Gastrocnemius medialis (tissue), 4 donors: ENCODE measurements at regions of chr3 and their contacts with region 1.

Region 1: DNA sequence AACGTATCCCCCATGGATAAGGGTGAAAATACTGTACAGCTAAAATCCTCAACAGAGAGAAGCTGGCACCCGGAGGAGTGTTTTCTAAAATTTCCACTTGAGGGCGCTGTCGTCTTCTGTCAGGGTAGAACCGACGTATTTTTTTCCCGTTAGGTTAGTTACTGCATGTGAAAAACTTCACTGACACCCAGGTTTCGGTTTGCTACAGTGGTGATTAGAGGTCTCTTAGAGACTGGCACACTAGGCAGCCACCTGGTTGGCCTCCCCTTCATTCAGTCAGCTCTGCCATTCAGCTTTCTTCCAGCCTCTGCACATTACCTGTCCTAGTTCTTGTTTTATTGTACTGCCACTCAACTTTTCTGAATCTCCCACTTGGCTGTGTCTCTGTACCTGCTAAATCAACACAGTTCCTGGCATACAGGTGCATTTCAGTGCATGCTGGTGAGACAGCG is 18.4 kb downstream of the CCK start:
- DNase-seq: peak in 1 of 2 donors; percentile 30
- ATAC-seq: peak in 1 of 2 donors; percentile 58
- H3K4me3 ChIP-seq: no peak overlapping the region
- H3K27ac ChIP-seq: no peak overlapping the region
- H3K4me1 ChIP-seq: no peaks in the 10 kb centered on the region
- H3K27me3 ChIP-seq: no peaks in the 10 kb centered on the region
- CTCF ChIP-seq: peak; percentile 29 to 63 (median 60)
- POLR2A ChIP-seq: no peak

Region 2: DNA sequence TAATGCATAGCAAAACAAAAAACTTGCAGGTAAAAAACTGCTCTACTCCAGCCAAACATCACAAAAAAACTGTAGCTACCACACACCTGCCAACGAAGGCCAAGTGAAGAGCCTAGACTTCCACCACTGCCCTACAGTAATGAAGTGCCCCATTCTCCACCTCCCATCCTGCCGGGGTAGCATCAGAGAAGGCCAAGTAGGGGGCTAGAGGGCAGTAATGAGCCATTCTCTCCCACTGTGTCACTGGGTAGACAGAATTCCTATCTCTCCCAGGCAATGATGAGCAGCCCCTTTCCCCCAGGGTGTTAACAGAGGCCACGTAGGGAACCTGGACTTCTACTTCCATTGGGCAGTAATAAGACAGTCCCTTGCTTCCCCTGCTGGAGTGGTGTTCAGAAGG is 324.7 kb after region 1 on chr3:
- in situ Hi-C with region 1: loop called in 1 of 4 experiments (anchors 25 kb)
- intact Hi-C with region 1: no loop called
- DNase-seq: no peak
- ATAC-seq: peak in 1 of 2 donors; percentile 51
- H3K4me3 ChIP-seq: no peak overlapping the region
- H3K27ac ChIP-seq: no peak overlapping the region
- H3K4me1 ChIP-seq: no peaks in the 10 kb centered on the region
- H3K27me3 ChIP-seq: no peaks in the 10 kb centered on the region
- CTCF ChIP-seq: peak in 2 of 5 experiments; percentile 31 to 46
- POLR2A ChIP-seq: no peak